Uterus (tissue), 4 donors: ENCODE measurements at regions of chr3 and their contacts with region 1.

Region 1: GRCh38 chr3:52001443-52001974 is 5.8 kb upstream of the RPL29 start:
- DNase-seq: peak; percentile 79 to 80
- H3K4me3 ChIP-seq: no peak overlapping the region
- H3K27ac ChIP-seq: no peak overlapping the region
- H3K4me1 ChIP-seq: peaks cover 0 to 12% of the 10 kb centered on the region in 2 donors
- H3K27me3 ChIP-seq: no peaks in the 10 kb centered on the region
- CTCF ChIP-seq: peak; percentile 95 to 97 (median 96)
- POLR2A ChIP-seq: peak in 1 of 2 donors; percentile 20

Region 2: GRCh38 chr3:52052831-52053306 is 51.4 kb after region 1 on chr3:
- intact Hi-C with region 1: loop called (anchors 5 kb)
- DNase-seq: peak; percentile 76 to 87
- H3K4me3 ChIP-seq: peak overlapping the region in 1 of 2 donors; percentile 7
- H3K27ac ChIP-seq: peak overlapping the region; percentile 89 to 94
- H3K4me1 ChIP-seq: peaks cover 0 to 37% of the 10 kb centered on the region in 2 donors
- H3K27me3 ChIP-seq: no peaks in the 10 kb centered on the region
- CTCF ChIP-seq: peak; percentile 44 to 69 (median 52)
- POLR2A ChIP-seq: peak in 1 of 2 donors; percentile 22

Region 3: DNA sequence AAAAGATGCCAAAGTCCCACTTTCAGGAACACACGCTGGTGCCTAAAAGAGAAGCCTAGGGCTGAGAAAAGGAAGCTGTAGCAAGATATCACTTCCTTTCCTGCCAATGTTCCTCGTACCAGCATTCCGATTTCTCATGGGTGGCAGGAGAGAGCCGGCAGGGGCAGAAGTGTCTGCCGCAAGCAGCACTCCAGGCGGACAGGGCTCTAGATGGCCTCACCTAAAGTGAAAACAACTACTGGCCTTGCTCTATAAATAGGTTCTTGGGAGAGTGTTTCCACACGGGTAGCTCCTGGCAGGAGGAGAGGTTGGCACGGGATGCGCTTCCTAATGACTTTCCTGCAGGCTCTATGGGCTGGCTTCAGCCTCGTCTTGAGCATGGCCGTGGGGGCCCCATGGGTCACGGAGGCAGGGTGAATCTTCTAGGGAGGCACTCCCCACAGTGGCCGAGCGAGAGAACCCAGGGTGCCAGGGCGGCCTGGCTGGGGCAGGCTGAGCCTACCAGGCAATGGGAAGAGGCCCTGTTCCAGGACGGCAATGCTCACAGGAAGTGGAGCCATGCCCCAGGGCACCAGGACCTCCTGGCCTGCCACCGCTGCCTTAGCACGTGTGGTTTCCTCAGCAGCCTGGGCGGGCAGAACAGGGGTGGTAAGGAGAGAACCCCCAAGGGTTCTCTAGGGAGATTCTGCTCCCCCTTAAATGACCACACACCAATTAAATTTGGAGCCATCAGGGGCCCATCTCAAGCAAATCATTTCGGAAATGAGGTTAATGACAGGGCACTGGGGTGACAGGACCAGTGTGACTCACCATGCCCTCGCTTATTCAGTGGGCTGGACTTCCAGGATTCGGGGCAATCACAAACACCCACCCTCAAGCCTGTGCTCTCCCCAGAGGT is 69.5 kb after region 1 on chr3:
- intact Hi-C with region 1: no loop called
- DNase-seq: peak; percentile 52 to 69
- H3K4me3 ChIP-seq: no peak overlapping the region
- H3K27ac ChIP-seq: peak overlapping the region; percentile 59 to 74
- H3K4me1 ChIP-seq: no peaks in the 10 kb centered on the region
- H3K27me3 ChIP-seq: no peaks in the 10 kb centered on the region
- CTCF ChIP-seq: peak in 1 of 4 experiments; percentile 5
- POLR2A ChIP-seq: peak in 1 of 2 donors; percentile 47

Region 4: DNA sequence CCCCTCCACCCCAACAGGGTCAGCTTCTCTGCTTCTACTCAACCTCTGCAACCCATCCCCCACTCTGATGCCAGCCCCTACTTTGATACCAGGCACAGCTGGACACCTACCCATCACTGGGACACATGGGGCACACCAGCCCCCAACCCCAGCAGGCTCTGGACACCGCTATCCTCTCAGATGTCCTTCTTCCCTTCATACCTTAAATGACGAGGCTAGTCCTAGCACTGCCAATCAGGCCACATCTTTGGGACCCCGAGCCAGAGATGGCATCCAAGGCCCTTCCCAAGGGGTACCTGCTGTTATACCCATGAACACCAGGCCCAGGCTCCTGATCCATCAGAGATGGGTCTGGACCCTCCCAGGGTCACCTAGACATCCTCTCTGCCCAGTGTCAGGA is 142.1 kb after region 1 on chr3:
- intact Hi-C with region 1: loop called (anchors 2 kb)
- DNase-seq: no peak
- H3K4me3 ChIP-seq: no peak overlapping the region
- H3K27ac ChIP-seq: no peak overlapping the region
- H3K4me1 ChIP-seq: no peaks in the 10 kb centered on the region
- H3K27me3 ChIP-seq: no peaks in the 10 kb centered on the region
- CTCF ChIP-seq: no peak
- POLR2A ChIP-seq: no peak

Region 5: DNA sequence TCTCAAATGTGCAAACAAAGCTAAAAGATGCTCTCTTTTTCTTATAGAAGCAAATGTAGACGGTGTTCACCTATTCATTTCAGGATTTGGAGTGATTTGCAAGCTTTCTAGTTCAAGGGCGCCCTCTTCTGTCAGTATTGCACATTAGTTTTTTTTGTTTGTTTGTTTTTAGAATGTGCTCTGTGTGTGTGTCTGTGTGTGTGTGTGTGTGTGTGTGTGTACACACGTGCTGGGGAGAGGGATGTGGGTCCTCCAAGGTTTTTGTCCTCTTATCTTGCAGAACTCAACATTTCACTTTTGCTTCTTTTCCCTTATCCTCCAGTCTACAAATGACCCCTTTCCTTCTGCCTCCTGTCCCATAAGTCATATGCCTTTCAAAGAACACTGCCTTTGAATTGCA is 338.1 kb after region 1 on chr3:
- intact Hi-C with region 1: loop called (anchors 10 kb)
- DNase-seq: peak in 1 of 2 donors; percentile 43
- H3K4me3 ChIP-seq: no peak overlapping the region
- H3K27ac ChIP-seq: no peak overlapping the region
- H3K4me1 ChIP-seq: no peaks in the 10 kb centered on the region
- H3K27me3 ChIP-seq: no peaks in the 10 kb centered on the region
- CTCF ChIP-seq: peak; percentile 67 to 85 (median 80)
- POLR2A ChIP-seq: no peak